ENCODE measurements at regions of chr15 and their contacts with region 1.

Region 1: GRCh38 chr15:25469377-25469776 is 30.6 kb upstream of the UBE3A start:
- DNase-seq: peak; percentile 17
- ATAC-seq: peak; percentile 87
- H3K4me3 ChIP-seq: no peak overlapping the region
- H3K27ac ChIP-seq: peak overlapping the region in 1 of 4 donors; percentile 41
- H3K4me1 ChIP-seq: peaks cover 8 to 14% of the 10 kb centered on the region in 2 donors
- H3K27me3 ChIP-seq: no peaks in the 10 kb centered on the region
- CTCF ChIP-seq: no peak
- POLR2A ChIP-seq: no peak

Region 2: DNA sequence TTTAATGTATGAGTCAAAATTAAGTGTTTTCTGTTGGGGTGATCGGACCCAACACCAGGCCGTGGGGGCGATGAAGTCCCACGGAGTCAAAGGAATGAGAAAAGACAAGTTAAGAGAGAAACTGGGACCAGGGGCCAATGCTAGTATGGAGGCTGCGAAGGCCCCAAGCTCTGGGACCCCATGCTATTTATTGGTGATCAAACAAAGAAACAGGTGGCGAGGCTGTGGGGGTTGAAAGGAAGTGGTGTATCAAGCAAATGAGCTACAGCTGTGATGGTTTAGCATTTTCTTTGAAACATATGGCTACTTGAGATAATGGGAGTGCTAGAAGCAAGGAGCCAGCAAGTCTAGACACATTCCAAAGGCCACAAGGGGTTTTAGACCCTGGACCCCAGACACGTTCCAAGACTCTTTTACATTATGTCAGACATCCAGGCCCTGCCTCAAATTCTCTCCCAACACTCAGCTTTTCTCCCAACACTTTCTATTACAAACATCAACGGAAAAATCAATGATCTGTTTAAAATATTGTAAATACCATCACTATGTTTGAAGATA is 570.6 kb before region 1 on chr15:
- in situ Hi-C with region 1: no loop called
- intact Hi-C with region 1: no loop called
- DNase-seq: no peak
- ATAC-seq: no peak
- H3K4me3 ChIP-seq: no peak overlapping the region
- H3K27ac ChIP-seq: no peak overlapping the region
- H3K4me1 ChIP-seq: no peaks in the 10 kb centered on the region
- H3K27me3 ChIP-seq: no peaks in the 10 kb centered on the region
- CTCF ChIP-seq: no peak
- POLR2A ChIP-seq: no peak

Region 3: DNA sequence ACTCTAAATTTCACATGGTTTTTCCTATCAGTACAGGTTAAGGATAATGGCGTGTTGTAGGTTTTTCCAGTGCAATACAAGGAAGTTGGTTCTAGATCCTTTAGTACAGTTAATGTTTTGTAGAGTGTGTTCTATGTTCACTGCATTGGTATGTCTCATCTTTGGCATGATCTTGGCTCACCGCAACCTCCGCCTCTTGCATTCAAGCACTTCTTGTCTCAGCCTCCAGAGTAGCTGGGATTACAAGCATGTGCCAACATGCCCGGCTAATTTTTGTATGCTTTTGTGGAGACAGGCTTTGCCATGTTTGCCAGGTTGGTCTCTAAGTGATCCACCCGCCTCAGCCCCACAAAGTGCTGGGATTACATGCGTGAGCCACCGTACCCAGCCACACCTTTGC is 484.2 kb before region 1 on chr15:
- in situ Hi-C with region 1: loop called in 1 of 4 experiments (anchors 25 kb)
- intact Hi-C with region 1: no loop called
- DNase-seq: no peak
- ATAC-seq: peak in 1 of 2 donors; percentile 67
- H3K4me3 ChIP-seq: no peak overlapping the region
- H3K27ac ChIP-seq: peak overlapping the region in 1 of 4 donors; percentile 30
- H3K4me1 ChIP-seq: no peaks in the 10 kb centered on the region
- H3K27me3 ChIP-seq: no peaks in the 10 kb centered on the region
- CTCF ChIP-seq: no peak
- POLR2A ChIP-seq: no peak

Region 4: DNA sequence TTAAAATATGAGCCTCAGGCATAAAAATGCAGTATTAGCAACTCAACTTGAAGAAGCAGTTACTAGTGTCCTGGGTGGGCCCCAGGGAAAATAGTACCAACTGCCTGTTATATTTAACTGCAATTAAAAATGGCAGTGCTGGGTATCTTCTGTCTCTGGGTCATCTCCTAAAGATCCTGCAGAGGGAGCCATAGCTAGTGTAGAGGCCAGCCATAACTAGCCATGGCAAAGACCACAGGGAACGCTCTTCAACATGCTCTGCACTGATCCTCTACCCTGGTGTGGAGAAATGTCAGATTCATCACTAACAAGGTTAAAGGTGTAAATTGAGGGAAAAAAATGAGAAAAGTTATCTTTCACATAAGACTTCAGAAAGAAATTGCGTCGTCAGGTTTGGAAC is 333.3 kb before region 1 on chr15:
- in situ Hi-C with region 1: loop called in 1 of 4 experiments (anchors 25 kb)
- intact Hi-C with region 1: no loop called
- DNase-seq: no peak
- ATAC-seq: peak; percentile 64 to 73
- H3K4me3 ChIP-seq: no peak overlapping the region
- H3K27ac ChIP-seq: no peak overlapping the region
- H3K4me1 ChIP-seq: no peaks in the 10 kb centered on the region
- H3K27me3 ChIP-seq: no peaks in the 10 kb centered on the region
- CTCF ChIP-seq: peak in 4 of 5 experiments; percentile 23 to 46 (median 34)
- POLR2A ChIP-seq: no peak

Region 5: GRCh38 chr15:25438601-25439368 is 30.6 kb before region 1 on chr15 and contains the start of gene UBE3A:
- in situ Hi-C with region 1: no loop called
- intact Hi-C with region 1: no loop called
- DNase-seq: peak; percentile 83 to 90
- ATAC-seq: peak; percentile 85 to 91
- H3K4me3 ChIP-seq: peak within 1 kb of the TSS; percentile 85 to 100 (median 96)
- H3K27ac ChIP-seq: peak within 1 kb of the TSS; percentile 91 to 100 (median 100)
- H3K4me1 ChIP-seq: peaks cover 38 to 39% of the 10 kb centered on the region in 2 donors
- H3K27me3 ChIP-seq: no peaks in the 10 kb centered on the region
- CTCF ChIP-seq: peak; percentile 19 to 57 (median 45)
- POLR2A ChIP-seq: peak; percentile 81 to 90
- total RNA-seq, gene UBE3A: 107 to 154 (median 130) TPM